ENCODE measurements at regions of chr7 and their contacts with region 1.

Region 1: GRCh38 chr7:141701489-141702046 is 398 bp downstream of the DENND11 start:
- DNase-seq: peak; percentile 56 to 64
- H3K4me3 ChIP-seq: peak overlapping the region in 2 of 3 donors; percentile 75 to 91
- H3K27ac ChIP-seq: peak overlapping the region; percentile 75 to 90 (median 78)
- H3K4me1 ChIP-seq: peaks cover 7 to 30% of the 10 kb centered on the region in 2 donors
- H3K27me3 ChIP-seq: no peaks in the 10 kb centered on the region
- CTCF ChIP-seq: no peak
- POLR2A ChIP-seq: peak in 1 of 2 donors; percentile 1

Region 2: GRCh38 chr7:141665208-141666035 is 36.1 kb before region 1 on chr7:
- intact Hi-C with region 1: loop called (anchors 5 kb)
- DNase-seq: no peak
- H3K4me3 ChIP-seq: no peak overlapping the region
- H3K27ac ChIP-seq: peak overlapping the region; percentile 23 to 89 (median 55)
- H3K4me1 ChIP-seq: peaks cover 35 to 57% of the 10 kb centered on the region in 2 donors
- H3K27me3 ChIP-seq: no peaks in the 10 kb centered on the region
- CTCF ChIP-seq: no peak
- POLR2A ChIP-seq: no peak